Esophagus squamous epithelium (tissue), 5 donors: ENCODE measurements at regions of chr20 and their contacts with region 1.

Region 1: DNA sequence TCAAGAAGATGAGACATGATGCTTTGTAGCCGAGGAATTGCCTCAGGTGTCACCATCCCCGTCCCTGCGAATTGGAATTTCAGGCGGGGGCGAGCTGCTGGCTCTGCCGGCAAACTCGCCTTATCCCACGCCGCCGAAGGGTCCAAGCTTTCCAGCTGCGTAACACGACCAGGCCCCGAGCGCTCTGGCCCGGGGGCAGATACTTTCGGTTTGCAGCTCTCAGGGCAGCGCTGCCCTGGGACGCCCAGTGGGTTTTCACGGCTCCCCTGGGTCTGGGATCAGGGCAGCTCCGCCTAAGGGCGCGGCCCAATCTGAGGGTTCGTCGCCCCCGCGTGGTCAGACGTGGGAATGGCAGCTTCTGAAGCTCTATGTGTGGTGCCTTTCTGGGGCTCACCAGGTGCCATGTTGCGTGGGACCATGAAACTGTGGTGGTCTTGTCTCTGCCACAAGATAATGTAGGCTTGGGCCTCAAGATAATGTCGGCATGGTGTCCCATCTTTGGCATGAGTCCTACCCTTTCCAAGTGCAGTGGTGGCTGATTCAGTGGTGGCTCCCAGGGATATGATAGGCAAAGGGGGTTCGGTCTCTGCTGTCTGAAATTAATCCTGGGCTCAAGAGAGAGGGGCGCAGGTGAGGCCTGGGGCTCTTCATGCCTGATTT is 20.9 kb downstream of the PIGT start:
- DNase-seq: no peak
- H3K4me3 ChIP-seq: peak overlapping the region; percentile 43 to 67 (median 56)
- H3K27ac ChIP-seq: peak overlapping the region; percentile 55 to 78 (median 74)
- H3K4me1 ChIP-seq: peaks cover 0 to 13% (median 3%) of the 10 kb centered on the region in 3 donors
- H3K27me3 ChIP-seq: no peaks in the 10 kb centered on the region
- CTCF ChIP-seq: peak; percentile 93 to 98 (median 95)
- POLR2A ChIP-seq: no peak

Region 2: DNA sequence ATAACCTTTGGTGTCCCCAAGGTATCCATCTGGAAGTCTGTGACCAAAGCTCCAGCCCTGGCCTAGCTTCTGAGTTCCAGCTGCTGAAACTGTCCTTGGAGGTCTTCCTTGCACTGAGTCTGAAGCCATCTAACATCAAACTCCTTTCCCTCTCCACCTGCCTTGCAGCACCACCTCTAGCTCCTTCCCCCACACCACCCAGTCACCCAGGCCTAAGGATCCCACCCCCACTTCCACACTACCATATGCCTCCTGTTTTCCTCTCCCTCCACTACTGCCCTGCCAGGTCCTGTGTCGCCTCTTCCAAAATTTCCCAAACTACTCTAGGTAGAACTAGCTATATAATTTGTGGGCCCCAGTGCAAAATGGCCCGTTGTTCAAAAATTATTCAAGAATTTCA is 117.9 kb before region 1 on chr20:
- intact Hi-C with region 1: loop called (anchors 5 kb)
- DNase-seq: no peak
- H3K4me3 ChIP-seq: no peak overlapping the region
- H3K27ac ChIP-seq: no peak overlapping the region
- H3K4me1 ChIP-seq: peaks cover 0 to 29% (median 0%) of the 10 kb centered on the region in 3 donors
- H3K27me3 ChIP-seq: peaks cover 3 to 43% (median 7%) of the 10 kb centered on the region in 4 donors
- CTCF ChIP-seq: no peak
- POLR2A ChIP-seq: no peak

Region 3: GRCh38 chr20:45377269-45377668 is 59.6 kb before region 1 on chr20:
- intact Hi-C with region 1: loop called (anchors 5 kb)
- DNase-seq: no peak
- H3K4me3 ChIP-seq: no peak overlapping the region
- H3K27ac ChIP-seq: no peak overlapping the region
- H3K4me1 ChIP-seq: peaks cover 6 to 20% (median 13%) of the 10 kb centered on the region in 3 donors
- H3K27me3 ChIP-seq: no peaks in the 10 kb centered on the region
- CTCF ChIP-seq: no peak
- POLR2A ChIP-seq: no peak